ENCODE measurements at regions of chr6 and their contacts with region 1.

Region 1: GRCh38 chr6:26342106-26343004 is 22.6 kb upstream of the BTN3A2 start:
- DNase-seq: no peak
- ATAC-seq: no peak

Region 2: DNA sequence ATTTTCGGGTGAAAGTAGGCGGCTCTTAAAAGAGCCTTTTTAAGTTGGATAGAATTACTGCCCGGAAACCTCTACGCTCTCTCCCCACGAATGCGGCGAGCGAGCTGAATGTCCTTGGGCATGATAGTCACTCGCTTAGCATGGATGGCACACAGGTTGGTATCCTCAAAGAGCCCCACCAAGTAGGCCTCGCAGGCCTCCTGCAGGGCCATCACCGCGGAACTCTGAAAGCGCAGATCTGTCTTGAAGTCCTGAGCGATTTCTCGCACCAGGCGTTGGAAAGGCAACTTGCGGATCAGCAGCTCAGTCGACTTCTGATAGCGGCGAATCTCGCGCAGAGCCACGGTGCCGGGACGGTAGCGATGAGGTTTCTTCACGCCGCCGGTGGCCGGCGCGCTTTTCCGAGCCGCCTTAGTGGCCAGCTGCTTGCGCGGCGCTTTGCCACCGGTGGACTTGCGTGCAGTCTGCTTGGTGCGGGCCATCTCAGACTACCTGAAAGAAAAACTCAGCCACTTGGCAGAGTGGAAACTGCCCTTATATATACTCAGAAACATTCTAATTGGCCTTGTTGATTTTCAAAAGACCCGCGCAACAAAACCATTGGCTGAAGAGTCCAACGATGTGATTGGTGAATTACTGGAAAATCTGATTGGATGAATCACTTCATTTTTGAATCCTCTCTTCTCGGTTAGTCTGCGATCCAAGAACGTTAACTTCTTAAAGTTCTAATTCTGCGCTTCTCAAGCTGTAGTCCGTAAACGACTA is 71.3 kb before region 1 on chr6:
- intact Hi-C with region 1: no loop called
- DNase-seq: peak; percentile 56
- ATAC-seq: peak; percentile 47 to 51

Region 3: GRCh38 chr6:26411751-26412150 is 69.4 kb after region 1 on chr6:
- intact Hi-C with region 1: no loop called
- DNase-seq: no peak
- ATAC-seq: no peak

Region 4: GRCh38 chr6:26568601-26569432 is 226.5 kb after region 1 on chr6:
- intact Hi-C with region 1: loop called in 1 of 2 experiments (anchors 5 kb)
- DNase-seq: peak; percentile 82
- ATAC-seq: peak; percentile 83 to 89

Region 5: DNA sequence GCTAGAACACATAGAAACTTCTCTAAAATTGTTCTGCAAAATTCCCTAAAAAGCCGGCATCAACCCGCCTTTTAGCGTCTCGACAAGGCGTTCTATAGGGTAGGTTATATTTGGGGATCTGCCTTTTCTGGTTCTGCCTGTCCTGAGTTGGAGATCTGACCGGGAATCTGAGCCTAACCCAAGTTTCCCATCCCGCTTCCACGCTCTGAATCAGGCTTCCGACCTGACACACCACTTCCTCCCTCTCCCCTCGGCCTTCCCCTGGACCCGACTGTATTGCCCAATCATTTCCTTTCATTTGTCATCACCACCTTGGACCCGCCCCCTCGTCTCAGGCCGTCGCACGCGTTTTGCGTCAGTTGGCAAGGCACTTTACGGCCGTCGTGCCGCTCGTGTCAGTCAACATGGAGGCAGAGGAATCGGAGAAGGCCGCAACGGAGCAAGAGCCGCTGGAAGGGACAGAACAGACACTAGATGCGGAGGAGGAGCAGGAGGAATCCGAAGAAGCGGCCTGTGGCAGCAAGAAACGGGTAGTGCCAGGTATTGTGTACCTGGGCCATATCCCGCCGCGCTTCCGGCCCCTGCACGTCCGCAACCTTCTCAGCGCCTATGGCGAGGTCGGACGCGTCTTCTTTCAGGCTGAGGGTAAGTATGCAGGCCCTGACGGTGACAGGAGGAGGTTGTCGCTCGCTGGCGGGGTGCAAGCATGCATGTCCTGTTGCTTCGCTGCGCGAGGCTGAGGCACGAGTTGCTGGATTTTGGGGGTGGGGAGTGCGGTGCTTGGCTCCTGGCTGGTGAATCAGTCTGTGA is 254.4 kb after region 1 on chr6 and contains the start of gene ABT1:
- intact Hi-C with region 1: loop called (anchors 1 to 10 kb)
- DNase-seq: peak; percentile 98
- ATAC-seq: peak; percentile 98
- total RNA-seq, gene ABT1: 8.2 to 10.7 TPM

Region 6: GRCh38 chr6:27078734-27079357 is 736.5 kb after region 1 on chr6:
- intact Hi-C with region 1: loop called in 1 of 2 experiments (anchors 5 kb)
- DNase-seq: no peak
- ATAC-seq: peak; percentile 55 to 81

Measured in left cardiac atrium (tissue), 4 donors.